Natural killer cell (primary cell): ENCODE measurements at regions of chr22 and their contacts with region 1.

Region 1: DNA sequence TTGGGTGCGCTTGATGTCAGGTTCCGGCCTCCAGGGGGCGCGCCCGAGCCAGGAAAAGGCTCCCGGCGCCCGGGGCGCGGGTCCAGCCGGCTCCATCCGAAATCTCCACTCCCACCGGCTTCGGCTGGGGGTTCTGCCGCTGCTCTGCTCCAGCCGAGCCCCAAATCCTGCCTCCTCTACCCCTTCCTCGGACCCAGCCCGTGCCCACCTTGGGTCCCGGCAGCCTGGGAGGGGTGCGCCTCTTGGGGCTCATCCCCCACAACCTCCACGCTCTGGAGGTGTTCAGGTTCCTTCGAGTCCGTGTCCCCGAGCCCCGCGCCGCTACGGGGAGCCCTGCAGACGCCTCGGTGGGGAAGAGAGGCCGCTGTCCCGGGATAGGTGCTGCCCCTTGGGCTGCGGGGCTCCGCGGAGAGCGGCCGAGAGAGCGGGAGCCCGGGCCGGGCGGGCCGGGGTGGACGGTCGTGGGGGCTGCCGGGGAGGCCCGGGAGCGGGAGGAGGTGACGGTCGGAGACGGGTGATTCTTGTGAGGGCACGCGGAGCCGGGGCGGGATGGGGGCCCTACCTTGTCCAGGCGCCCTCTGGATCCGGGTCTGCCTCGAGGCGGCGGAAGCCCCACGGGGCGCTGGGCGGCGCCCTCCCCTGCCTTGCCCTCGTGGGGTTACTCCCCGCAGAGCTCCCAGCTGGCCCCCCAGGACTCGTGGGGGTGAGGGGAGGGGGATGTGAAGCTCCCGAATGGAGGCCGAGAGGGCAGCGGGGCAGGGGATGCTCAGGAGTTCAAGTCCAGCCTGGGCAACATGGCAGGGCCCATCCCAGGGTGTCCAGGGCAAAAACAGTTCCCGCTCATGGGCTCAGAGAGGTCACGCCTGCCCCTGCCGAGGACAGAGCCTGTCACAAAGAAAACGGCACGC is 13.2 kb upstream of the CYB5R3 start:
- DNase-seq: peak; percentile 78 to 85
- ATAC-seq: peak; percentile 86 to 96 (median 90)
- H3K4me3 ChIP-seq: peak overlapping the region; percentile 53
- H3K4me3 Mint-ChIP-seq: peak overlapping the region; percentile 66
- H3K27ac ChIP-seq: no peak overlapping the region
- H3K27ac Mint-ChIP-seq: peak overlapping the region in 1 of 2 donors; percentile 27
- H3K4me1 ChIP-seq: peaks cover 13% of the 10 kb centered on the region
- H3K4me1 Mint-ChIP-seq: peaks cover 0 to 4% of the 10 kb centered on the region in 2 donors
- H3K27me3 ChIP-seq: no peaks in the 10 kb centered on the region
- H3K27me3 Mint-ChIP-seq: peaks cover 0 to 3% of the 10 kb centered on the region in 2 donors
- CTCF ChIP-seq: peak; percentile 82

Region 2: DNA sequence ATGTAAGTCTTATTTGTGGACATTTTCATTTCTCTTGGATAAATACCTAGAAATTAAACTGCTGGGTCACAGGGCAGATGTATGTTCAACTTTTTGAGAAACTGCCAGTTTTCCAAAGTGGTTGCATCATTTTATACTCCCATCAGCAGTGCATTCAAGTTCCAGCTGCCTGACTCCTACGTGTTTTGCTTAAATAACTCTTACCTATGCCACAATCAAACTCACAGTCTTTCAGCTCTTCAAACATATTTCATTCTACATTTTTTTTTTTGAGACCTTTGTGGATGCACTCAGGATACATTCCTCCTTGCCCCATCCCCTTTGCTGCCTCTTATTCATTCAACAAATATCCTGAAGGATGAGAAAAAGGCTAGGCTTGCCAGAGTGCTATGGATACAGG is 401.1 kb before region 1 on chr22:
- intact Hi-C with region 1: no loop called
- DNase-seq: no peak
- ATAC-seq: no peak
- H3K4me3 ChIP-seq: no peak overlapping the region
- H3K4me3 Mint-ChIP-seq: no peak overlapping the region
- H3K27ac ChIP-seq: no peak overlapping the region
- H3K27ac Mint-ChIP-seq: no peak overlapping the region
- H3K4me1 ChIP-seq: peaks cover 6% of the 10 kb centered on the region
- H3K4me1 Mint-ChIP-seq: peaks cover 85 to 93% of the 10 kb centered on the region in 2 donors
- H3K27me3 ChIP-seq: no peaks in the 10 kb centered on the region
- H3K27me3 Mint-ChIP-seq: no peaks in the 10 kb centered on the region
- CTCF ChIP-seq: no peak

Region 3: GRCh38 chr22:42743501-42743991 is 81.2 kb after region 1 on chr22:
- intact Hi-C with region 1: no loop called
- DNase-seq: no peak
- ATAC-seq: no peak
- H3K4me3 ChIP-seq: no peak overlapping the region
- H3K4me3 Mint-ChIP-seq: no peak overlapping the region
- H3K27ac ChIP-seq: no peak overlapping the region
- H3K27ac Mint-ChIP-seq: no peak overlapping the region
- H3K4me1 ChIP-seq: no peaks in the 10 kb centered on the region
- H3K4me1 Mint-ChIP-seq: peaks cover 0 to 5% of the 10 kb centered on the region in 2 donors
- H3K27me3 ChIP-seq: no peaks in the 10 kb centered on the region
- H3K27me3 Mint-ChIP-seq: no peaks in the 10 kb centered on the region
- CTCF ChIP-seq: no peak

Region 4: DNA sequence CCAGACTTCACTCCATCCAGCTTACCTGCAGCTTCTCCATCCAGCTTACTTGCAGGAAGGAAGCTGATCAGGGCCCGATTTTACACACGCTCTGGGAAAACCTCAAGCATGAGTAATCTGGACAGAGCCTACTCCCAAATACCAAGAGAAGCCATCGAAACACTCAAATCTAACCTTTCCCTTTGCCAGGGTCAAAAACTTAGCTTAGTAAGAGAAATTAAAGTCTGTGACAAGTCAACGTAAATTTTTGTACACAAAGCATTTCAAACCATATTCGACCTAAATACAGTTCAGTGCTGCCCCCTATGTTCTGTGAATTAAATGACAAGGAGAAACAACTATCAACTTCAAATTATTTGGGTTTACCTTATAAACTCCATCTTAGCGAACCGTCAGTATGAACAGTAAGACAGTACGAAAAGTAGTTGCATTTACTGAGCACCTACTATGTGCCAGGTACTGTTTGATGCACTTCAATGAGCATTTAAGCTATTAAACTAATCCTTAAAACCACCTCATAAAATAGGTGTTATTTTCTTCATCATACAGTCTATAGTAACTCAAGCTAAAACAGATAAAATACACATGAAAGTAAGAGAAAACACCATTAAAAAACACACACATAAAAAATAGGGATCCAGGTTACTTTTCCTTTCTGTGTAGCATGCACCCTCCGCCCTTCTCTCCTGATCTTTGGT is 157.8 kb after region 1 on chr22:
- intact Hi-C with region 1: loop called (anchors 10 kb)
- DNase-seq: peak in 1 of 2 donors; percentile 57
- ATAC-seq: peak in 2 of 3 donors; percentile 42 to 46
- H3K4me3 ChIP-seq: no peak overlapping the region
- H3K4me3 Mint-ChIP-seq: no peak overlapping the region
- H3K27ac ChIP-seq: no peak overlapping the region
- H3K27ac Mint-ChIP-seq: peak overlapping the region in 1 of 2 donors; percentile 31
- H3K4me1 ChIP-seq: no peaks in the 10 kb centered on the region
- H3K4me1 Mint-ChIP-seq: peaks cover 13 to 15% of the 10 kb centered on the region in 2 donors
- H3K27me3 ChIP-seq: no peaks in the 10 kb centered on the region
- H3K27me3 Mint-ChIP-seq: no peaks in the 10 kb centered on the region
- CTCF ChIP-seq: peak; percentile 52

Region 5: GRCh38 chr22:43031617-43032016 is 369.2 kb after region 1 on chr22:
- intact Hi-C with region 1: loop called (anchors 5 kb)
- DNase-seq: no peak
- ATAC-seq: no peak
- H3K4me3 ChIP-seq: no peak overlapping the region
- H3K4me3 Mint-ChIP-seq: no peak overlapping the region
- H3K27ac ChIP-seq: no peak overlapping the region
- H3K27ac Mint-ChIP-seq: no peak overlapping the region
- H3K4me1 ChIP-seq: peaks cover 5% of the 10 kb centered on the region
- H3K4me1 Mint-ChIP-seq: peaks cover 0 to 6% of the 10 kb centered on the region in 2 donors
- H3K27me3 ChIP-seq: no peaks in the 10 kb centered on the region
- H3K27me3 Mint-ChIP-seq: no peaks in the 10 kb centered on the region
- CTCF ChIP-seq: no peak

Region 6: GRCh38 chr22:43053176-43053575 is 390.8 kb after region 1 on chr22:
- intact Hi-C with region 1: no loop called
- DNase-seq: no peak
- ATAC-seq: no peak
- H3K4me3 ChIP-seq: no peak overlapping the region
- H3K4me3 Mint-ChIP-seq: no peak overlapping the region
- H3K27ac ChIP-seq: no peak overlapping the region
- H3K27ac Mint-ChIP-seq: no peak overlapping the region
- H3K4me1 ChIP-seq: no peaks in the 10 kb centered on the region
- H3K4me1 Mint-ChIP-seq: no peaks in the 10 kb centered on the region
- H3K27me3 ChIP-seq: no peaks in the 10 kb centered on the region
- H3K27me3 Mint-ChIP-seq: no peaks in the 10 kb centered on the region
- CTCF ChIP-seq: no peak